Mammary epithelial cell (primary cell): ENCODE measurements at regions of chr7 and their contacts with region 1.

Region 1: DNA sequence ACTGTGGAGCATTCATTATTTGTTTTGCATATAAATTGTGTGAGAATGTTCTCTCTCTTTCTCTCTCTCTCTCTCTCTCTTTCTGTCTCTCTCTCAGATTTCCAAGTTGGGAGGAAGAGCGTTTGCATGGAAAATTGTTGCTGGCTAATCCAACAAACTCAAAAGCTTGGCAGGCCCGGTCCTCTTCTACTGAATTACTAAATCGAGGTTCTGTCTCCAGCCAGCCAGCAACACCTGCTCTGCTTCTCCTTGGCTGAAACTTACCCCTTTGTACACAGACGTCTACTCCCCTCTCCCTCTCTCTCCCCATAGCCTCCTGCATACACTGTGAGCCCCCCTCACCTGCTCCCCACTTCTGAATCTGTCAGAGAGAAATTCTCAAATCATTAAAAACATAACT is 996.4 kb upstream of the AUTS2 start:
- DNase-seq: no peak
- H3K4me3 ChIP-seq: no peak overlapping the region
- H3K27ac ChIP-seq: no peak overlapping the region
- H3K4me1 ChIP-seq: no peaks in the 10 kb centered on the region
- H3K27me3 ChIP-seq: no peaks in the 10 kb centered on the region
- CTCF ChIP-seq: no peak

Region 2: DNA sequence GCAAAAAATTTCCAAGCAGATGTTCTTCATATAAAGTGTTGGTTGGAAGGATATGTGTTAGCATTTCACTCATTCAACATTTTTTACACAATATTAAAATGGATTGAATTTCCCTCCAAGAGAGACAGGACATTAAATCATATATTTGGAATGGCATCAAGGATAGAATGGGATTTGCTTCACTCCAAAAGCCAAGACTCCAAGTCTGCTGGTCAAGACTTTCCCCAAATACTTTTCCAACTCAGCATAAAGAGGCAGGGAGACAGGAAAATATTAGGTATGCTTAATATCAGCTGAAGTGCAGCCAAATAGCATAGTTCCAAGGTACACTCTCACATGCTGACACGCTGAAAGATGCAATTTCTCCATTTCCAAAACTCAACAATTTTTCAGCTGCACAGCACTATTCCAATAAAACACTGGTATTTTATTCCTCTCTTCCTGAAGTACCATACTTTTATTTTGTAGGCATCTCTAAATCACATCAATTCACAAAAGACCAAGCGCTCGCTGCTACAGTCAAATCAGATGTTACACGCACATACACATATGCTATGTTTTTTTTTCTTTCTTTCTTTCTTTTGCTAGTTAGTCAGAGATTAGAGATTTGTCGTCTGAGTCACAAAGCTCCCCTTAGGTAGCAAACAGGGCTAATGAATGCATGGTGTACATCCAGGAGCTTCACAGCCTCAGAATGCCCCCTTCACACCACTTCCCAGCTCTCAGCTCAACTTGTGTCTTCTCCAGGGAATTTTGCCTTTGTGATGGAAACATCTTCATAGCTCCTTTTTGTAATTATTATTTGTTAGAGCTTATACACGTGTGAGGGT is 37.3 kb before region 1 on chr7:
- CTCF ChIA-PET with region 1: no interaction called
- dilution Hi-C with region 1: no loop called
- in situ Hi-C with region 1: no loop called
- intact Hi-C with region 1: no loop called
- DNase-seq: no peak
- H3K4me3 ChIP-seq: no peak overlapping the region
- H3K27ac ChIP-seq: no peak overlapping the region
- H3K4me1 ChIP-seq: no peaks in the 10 kb centered on the region
- H3K27me3 ChIP-seq: no peaks in the 10 kb centered on the region
- CTCF ChIP-seq: no peak

Region 3: DNA sequence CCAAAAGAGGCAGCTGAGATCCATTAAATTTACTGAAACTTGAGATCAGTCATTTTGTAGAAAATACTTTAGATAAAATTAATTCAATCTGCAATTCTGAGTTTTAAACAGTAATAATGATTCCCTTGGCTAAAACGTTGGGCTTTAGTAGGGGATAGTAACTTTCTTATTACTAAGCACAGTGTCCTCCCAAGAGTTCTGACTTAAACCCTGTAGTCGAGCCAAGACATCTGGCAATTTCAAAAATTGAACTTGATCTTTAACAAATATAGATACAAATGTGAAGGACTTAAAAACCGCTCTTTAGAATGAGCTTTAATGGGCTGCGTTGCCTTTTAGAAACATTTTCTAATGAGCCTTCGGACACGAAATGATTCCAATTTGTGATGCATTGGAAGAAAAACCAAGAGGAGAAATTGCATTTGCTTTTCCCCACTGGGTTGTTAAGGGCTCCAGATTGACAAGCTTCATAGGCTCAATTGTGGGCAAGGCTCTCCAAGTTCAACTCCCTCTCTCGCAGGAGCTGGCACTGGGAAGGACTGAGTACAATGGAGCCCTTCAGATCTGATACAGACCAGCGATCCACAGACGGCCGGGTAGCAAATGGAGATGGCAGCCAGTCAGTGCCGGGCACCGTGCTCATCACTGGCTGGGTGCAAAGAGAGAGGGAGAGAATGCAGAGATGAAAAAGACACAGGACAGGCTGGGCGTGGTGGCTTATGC is 75.1 kb after region 1 on chr7:
- CTCF ChIA-PET with region 1: no interaction called
- dilution Hi-C with region 1: loop called (anchors 5 kb)
- in situ Hi-C with region 1: no loop called
- intact Hi-C with region 1: no loop called
- DNase-seq: no peak
- H3K4me3 ChIP-seq: no peak overlapping the region
- H3K27ac ChIP-seq: no peak overlapping the region
- H3K4me1 ChIP-seq: no peaks in the 10 kb centered on the region
- H3K27me3 ChIP-seq: no peaks in the 10 kb centered on the region
- CTCF ChIP-seq: no peak